ENCODE measurements at regions of chr1 and their contacts with region 1.

Region 1: GRCh38 chr1:109773146-109773899 is 9.6 kb upstream of the EPS8L3 start:
- DNase-seq: peak; percentile 28
- ATAC-seq: peak; percentile 94
- H3K4me3 ChIP-seq: no peak overlapping the region
- H3K27ac ChIP-seq: no peak overlapping the region
- H3K4me1 ChIP-seq: no peaks in the 10 kb centered on the region
- H3K27me3 ChIP-seq: peaks cover 0 to 2% of the 10 kb centered on the region in 2 experiments; a peak in 1 of 4 replicates
- CTCF ChIP-seq: peak; percentile 90 to 97 (median 92)
- EP300 ChIP-seq: no peak
- POLR2A ChIP-seq: no peak
- RAD21 ChIP-seq: peak; percentile 98

Region 2: DNA sequence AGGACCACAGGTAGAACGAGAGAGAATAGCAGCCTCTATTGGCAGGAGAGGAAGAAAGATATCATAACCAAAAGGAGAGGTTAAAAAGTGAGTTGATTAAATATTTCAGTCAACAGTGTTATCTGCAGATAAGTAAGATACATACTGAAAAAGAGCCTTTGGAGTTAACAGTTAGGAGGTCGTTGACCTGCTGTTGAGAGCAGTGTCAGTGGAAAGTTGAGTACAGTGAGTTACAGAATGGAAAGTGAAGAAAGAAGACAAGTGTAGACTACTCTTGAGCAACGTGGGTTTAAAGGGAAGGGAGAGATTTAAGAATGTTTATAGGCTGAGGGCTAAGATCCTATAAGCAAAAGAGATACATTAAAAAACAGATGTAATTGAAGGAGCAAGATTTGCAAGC is 184.1 kb before region 1 on chr1:
- CTCF ChIA-PET with region 1: no interaction called
- POLR2A ChIA-PET with region 1: no interaction called
- RAD21 ChIA-PET with region 1: no interaction called
- SMC1A ChIA-PET with region 1: no interaction called
- in situ Hi-C with region 1: no loop called
- intact Hi-C with region 1: no loop called
- DNase-seq: no peak
- ATAC-seq: no peak
- H3K4me3 ChIP-seq: no peak overlapping the region
- H3K27ac ChIP-seq: no peak overlapping the region
- H3K4me1 ChIP-seq: no peaks in the 10 kb centered on the region
- H3K27me3 ChIP-seq: no peaks in the 10 kb centered on the region
- CTCF ChIP-seq: no peak
- EP300 ChIP-seq: no peak
- POLR2A ChIP-seq: no peak
- RAD21 ChIP-seq: no peak

Region 3: GRCh38 chr1:109649491-109649914 is 123.8 kb before region 1 on chr1:
- CTCF ChIA-PET with region 1: interaction called, 282 read pairs
- POLR2A ChIA-PET with region 1: no interaction called
- RAD21 ChIA-PET with region 1: interaction called, 13 read pairs
- SMC1A ChIA-PET with region 1: interaction called, 40 read pairs
- in situ Hi-C with region 1: loop called (anchors 5 kb)
- intact Hi-C with region 1: loop called (anchors 5 kb)
- DNase-seq: no peak
- ATAC-seq: no peak
- H3K4me3 ChIP-seq: no peak overlapping the region
- H3K27ac ChIP-seq: no peak overlapping the region
- H3K4me1 ChIP-seq: no peaks in the 10 kb centered on the region
- H3K27me3 ChIP-seq: no peaks in the 10 kb centered on the region
- CTCF ChIP-seq: peak in 1 of 3 experiments; percentile 24; a peak in 1 of 6 replicates
- EP300 ChIP-seq: no peak
- POLR2A ChIP-seq: no peak
- RAD21 ChIP-seq: peak; percentile 29; the same call in 1 of the 2 replicates

Region 4: DNA sequence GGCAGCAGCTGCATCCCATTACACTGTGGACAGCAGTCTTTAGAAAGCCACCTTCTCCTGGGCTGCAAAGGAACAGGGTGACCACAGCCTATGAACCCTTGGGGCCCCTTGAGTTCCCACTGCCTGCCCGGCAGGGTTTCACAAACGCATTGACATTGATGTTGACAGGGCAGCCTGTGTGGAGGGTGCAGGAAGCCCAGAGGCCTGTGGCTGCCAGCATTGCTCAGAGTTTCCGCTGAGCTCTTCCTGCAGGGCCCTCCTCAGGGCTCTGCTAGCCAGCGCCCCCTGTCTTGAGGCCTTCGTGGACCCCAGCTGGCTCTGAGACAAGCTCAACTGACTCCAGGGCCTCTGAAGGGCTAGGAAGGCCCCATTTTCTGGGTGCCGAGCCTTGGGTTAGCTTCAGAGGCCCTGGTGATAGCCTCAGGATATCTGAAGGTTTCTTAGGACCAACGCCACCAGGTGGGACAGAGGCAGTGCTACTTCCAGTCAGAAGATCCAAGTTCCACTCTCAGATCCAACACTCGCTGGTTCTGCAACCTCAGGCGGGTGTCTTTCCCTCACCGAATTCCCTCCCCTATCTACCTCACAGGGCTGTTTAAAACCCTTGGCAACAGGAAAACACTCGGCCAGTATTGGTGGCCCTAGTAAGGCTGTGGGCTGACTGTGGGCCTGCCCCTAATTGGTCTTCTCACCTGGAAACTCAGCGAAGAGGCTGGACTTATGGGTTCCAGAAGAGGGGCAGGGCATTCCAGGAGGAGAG is 17.6 kb after region 1 on chr1:
- CTCF ChIA-PET with region 1: interaction called, 18 read pairs
- POLR2A ChIA-PET with region 1: no interaction called
- RAD21 ChIA-PET with region 1: interaction called, 6 read pairs
- SMC1A ChIA-PET with region 1: interaction called, 4 read pairs
- in situ Hi-C with region 1: no loop called
- intact Hi-C with region 1: no loop called
- DNase-seq: peak; percentile 23
- ATAC-seq: peak; percentile 88
- H3K4me3 ChIP-seq: no peak overlapping the region
- H3K27ac ChIP-seq: peak overlapping the region; percentile 22
- H3K4me1 ChIP-seq: peaks cover 11% of the 10 kb centered on the region
- H3K27me3 ChIP-seq: no peaks in the 10 kb centered on the region; a peak in 1 of 4 replicates
- CTCF ChIP-seq: peak; percentile 32 to 51 (median 37); a peak in 5 of 6 replicates
- EP300 ChIP-seq: 0 out of 4 replicates have a peak, but pooled peaks of 1 of the 2 experiments have one; percentile 8
- POLR2A ChIP-seq: peak; percentile 49
- RAD21 ChIP-seq: peak; percentile 35; the same call in 1 of the 2 replicates

Region 5: GRCh38 chr1:109910123-109910962 is 137.0 kb after region 1 on chr1 and contains the start of gene CSF1:
- CTCF ChIA-PET with region 1: interaction called, 6 read pairs
- POLR2A ChIA-PET with region 1: no interaction called
- RAD21 ChIA-PET with region 1: interaction called, 4 read pairs
- SMC1A ChIA-PET with region 1: no interaction called
- in situ Hi-C with region 1: no loop called
- intact Hi-C with region 1: loop called (anchors 5 kb)
- DNase-seq: peak; percentile 48
- ATAC-seq: peak; percentile 57
- H3K4me3 ChIP-seq: peak within 1 kb of the TSS; percentile 76
- H3K27ac ChIP-seq: peak within 1 kb of the TSS; percentile 64
- H3K4me1 ChIP-seq: peaks cover 20% of the 10 kb centered on the region
- H3K27me3 ChIP-seq: no peaks in the 10 kb centered on the region
- CTCF ChIP-seq: no peak
- EP300 ChIP-seq: no peak
- POLR2A ChIP-seq: peak; percentile 74
- RAD21 ChIP-seq: no peak
- polyA plus RNA-seq, gene CSF1: 1.2 to 2.0 TPM

Region 6: GRCh38 chr1:109993885-109994284 is 220.6 kb after region 1 on chr1:
- CTCF ChIA-PET with region 1: interaction called, 11 read pairs
- POLR2A ChIA-PET with region 1: no interaction called
- RAD21 ChIA-PET with region 1: interaction called, 4 read pairs
- SMC1A ChIA-PET with region 1: interaction called, 431 read pairs
- in situ Hi-C with region 1: no loop called
- intact Hi-C with region 1: no loop called
- DNase-seq: no peak
- ATAC-seq: no peak
- H3K4me3 ChIP-seq: no peak overlapping the region
- H3K27ac ChIP-seq: no peak overlapping the region
- H3K4me1 ChIP-seq: no peaks in the 10 kb centered on the region
- H3K27me3 ChIP-seq: no peaks in the 10 kb centered on the region
- CTCF ChIP-seq: no peak
- EP300 ChIP-seq: no peak
- POLR2A ChIP-seq: no peak
- RAD21 ChIP-seq: no peak

Region 7: GRCh38 chr1:110003747-110004630 is 230.7 kb after region 1 on chr1:
- CTCF ChIA-PET with region 1: interaction called, 73 read pairs
- POLR2A ChIA-PET with region 1: no interaction called
- RAD21 ChIA-PET with region 1: interaction called, 43 read pairs
- SMC1A ChIA-PET with region 1: interaction called, 6 read pairs
- in situ Hi-C with region 1: no loop called
- intact Hi-C with region 1: no loop called
- DNase-seq: peak; percentile 45
- ATAC-seq: peak; percentile 84
- H3K4me3 ChIP-seq: peak overlapping the region; percentile 16; the same call in 1 of the 2 replicates
- H3K27ac ChIP-seq: peak overlapping the region; percentile 50
- H3K4me1 ChIP-seq: peaks cover 14% of the 10 kb centered on the region
- H3K27me3 ChIP-seq: no peaks in the 10 kb centered on the region
- CTCF ChIP-seq: no peak
- EP300 ChIP-seq: no peak
- POLR2A ChIP-seq: no peak
- RAD21 ChIP-seq: no peak

Region 8: GRCh38 chr1:110011527-110012041 is 238.3 kb after region 1 on chr1:
- CTCF ChIA-PET with region 1: interaction called, 73 read pairs
- POLR2A ChIA-PET with region 1: no interaction called
- RAD21 ChIA-PET with region 1: interaction called, 43 read pairs
- SMC1A ChIA-PET with region 1: interaction called, 39 read pairs
- in situ Hi-C with region 1: no loop called
- intact Hi-C with region 1: loop called (anchors 1 kb)
- DNase-seq: peak; percentile 84
- ATAC-seq: peak; percentile 99
- H3K4me3 ChIP-seq: no peak overlapping the region
- H3K27ac ChIP-seq: peak overlapping the region; percentile 34
- H3K4me1 ChIP-seq: peaks cover 27% of the 10 kb centered on the region
- H3K27me3 ChIP-seq: no peaks in the 10 kb centered on the region
- CTCF ChIP-seq: peak; percentile 68 to 89 (median 74)
- EP300 ChIP-seq: no peak
- POLR2A ChIP-seq: no peak
- RAD21 ChIP-seq: peak; percentile 75

Region 9: DNA sequence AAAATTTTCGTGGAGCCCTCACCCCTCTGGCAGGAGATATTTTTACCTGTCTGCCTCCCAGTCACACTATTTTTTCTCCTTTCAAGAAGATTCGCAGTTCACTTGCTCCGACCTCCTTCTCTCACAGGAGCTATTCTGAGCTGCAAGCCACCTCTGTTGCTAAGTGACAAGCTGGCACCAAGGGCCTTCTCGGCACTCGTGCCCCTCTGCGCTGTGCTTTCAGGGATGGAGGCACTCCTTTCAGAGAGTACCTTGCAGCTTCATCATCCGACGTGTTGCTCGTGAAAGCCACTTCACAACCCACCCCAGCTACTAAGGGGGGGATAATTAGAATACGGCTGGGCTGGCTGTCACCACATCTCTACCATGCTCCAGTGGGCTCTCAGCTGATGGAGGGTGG is 388.6 kb after region 1 on chr1:
- CTCF ChIA-PET with region 1: no interaction called
- POLR2A ChIA-PET with region 1: no interaction called
- RAD21 ChIA-PET with region 1: no interaction called
- SMC1A ChIA-PET with region 1: no interaction called
- in situ Hi-C with region 1: no loop called
- intact Hi-C with region 1: no loop called
- DNase-seq: no peak
- ATAC-seq: no peak
- H3K4me3 ChIP-seq: no peak overlapping the region
- H3K27ac ChIP-seq: no peak overlapping the region
- H3K4me1 ChIP-seq: no peaks in the 10 kb centered on the region
- H3K27me3 ChIP-seq: peaks cover 0 to 4% of the 10 kb centered on the region in 2 experiments; a peak in 3 of 4 replicates
- CTCF ChIP-seq: no peak
- EP300 ChIP-seq: no peak
- POLR2A ChIP-seq: no peak
- RAD21 ChIP-seq: no peak

Measured in GM12878 (cell line).